ENCODE measurements at regions of chr4 and their contacts with region 1.

Region 1: DNA sequence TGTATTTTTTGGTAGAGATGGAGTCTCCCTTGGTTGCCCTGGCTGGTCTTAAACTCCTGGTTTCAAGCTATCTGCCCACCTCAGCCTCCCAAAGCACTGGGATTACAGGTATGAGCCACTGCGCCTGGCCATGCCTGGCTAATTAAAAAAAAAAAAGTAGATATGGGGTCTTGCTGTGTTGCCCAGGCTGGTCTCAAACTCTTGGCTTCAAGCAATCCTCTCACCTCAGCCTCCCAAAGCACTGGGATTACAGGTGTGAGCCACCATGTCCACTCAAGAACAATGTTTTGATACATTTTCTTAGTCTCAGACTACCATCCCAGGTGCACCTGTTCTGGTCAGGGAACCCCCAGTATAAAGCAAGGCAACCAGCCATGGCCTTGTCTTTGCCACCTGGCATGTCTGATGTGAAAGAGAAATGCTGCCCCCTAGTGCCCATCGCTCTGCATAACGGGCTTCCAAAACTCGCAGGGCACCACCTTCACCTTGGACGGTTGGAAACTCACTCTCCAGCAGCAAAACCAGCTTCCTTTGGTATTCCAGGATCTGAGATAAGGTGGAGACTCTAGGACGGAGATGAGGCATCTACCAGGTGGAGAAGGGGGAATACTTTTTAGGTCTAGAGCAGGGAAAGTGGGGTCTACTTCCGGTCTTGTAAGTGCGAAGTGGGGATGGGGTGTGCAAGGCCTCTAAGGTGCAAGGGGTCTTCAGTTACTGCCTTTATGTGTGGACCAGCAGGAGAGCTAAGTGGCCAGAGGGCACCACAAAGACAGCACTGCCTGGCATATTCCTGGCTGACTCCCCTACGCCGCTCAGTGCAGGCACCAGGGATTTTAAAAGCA is 47.7 kb upstream of the AFAP1 start:
- DNase-seq: peak; percentile 63 to 75
- ATAC-seq: peak; percentile 54 to 86 (median 72)
- H3K4me3 ChIP-seq: no peak overlapping the region
- H3K27ac ChIP-seq: no peak overlapping the region
- H3K4me1 ChIP-seq: peaks cover 0 to 18% (median 10%) of the 10 kb centered on the region in 9 donors
- H3K27me3 ChIP-seq: no peaks in the 10 kb centered on the region
- CTCF ChIP-seq: peak; percentile 67 to 90 (median 88)

Region 2: GRCh38 chr4:7761720-7762119 is 225.6 kb before region 1 on chr4:
- intact Hi-C with region 1: loop called in 3 of 10 experiments (anchors 2 to 5 kb)
- DNase-seq: peak; percentile 76 to 82
- ATAC-seq: peak; percentile 67 to 87 (median 80)
- H3K4me3 ChIP-seq: no peak overlapping the region
- H3K27ac ChIP-seq: peak overlapping the region in 2 of 10 donors; percentile 1 to 17
- H3K4me1 ChIP-seq: peaks cover 2 to 28% (median 11%) of the 10 kb centered on the region in 9 donors
- H3K27me3 ChIP-seq: no peaks in the 10 kb centered on the region
- CTCF ChIP-seq: peak; percentile 74 to 91 (median 82)

Region 3: DNA sequence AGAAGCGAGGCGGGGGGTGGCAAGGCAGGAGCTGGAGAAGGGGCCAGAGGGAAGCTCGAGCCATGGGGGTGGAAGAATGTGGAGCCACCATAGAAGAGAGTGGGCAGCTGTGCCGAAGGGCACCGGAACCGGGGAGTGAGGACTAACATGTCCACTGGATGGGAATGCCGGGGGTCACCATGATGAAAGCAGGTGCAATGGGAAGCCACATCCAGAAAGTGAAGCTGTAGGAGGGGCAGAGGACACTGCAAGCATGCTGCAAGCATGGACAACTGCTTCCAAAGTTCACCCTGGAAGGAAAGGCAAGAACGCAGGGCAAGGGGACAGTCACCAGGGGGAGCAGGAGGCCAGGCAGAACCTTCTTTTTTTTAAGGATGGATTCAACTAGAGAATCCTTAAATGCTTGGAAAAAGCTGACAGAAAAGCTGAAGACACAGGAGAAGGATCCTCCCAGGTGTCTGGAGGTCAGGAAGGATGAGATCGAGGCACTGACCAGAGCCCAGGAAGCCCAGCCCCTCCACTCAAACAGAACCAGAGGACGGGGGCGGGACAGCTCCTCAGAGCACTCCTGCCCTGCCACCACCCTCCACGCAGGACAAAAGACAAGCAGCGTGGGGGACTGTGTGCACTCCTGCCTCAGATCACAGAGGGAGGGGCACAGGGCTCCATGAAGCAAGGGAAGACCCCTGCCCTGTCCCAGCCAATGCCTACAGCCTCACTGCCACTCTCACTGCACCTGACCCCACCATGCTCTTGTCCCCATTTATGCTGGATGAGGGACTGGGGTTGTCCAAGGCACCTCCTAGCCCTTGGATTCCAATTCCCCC is 216.9 kb before region 1 on chr4:
- intact Hi-C with region 1: loop called in 1 of 10 experiments (anchors 10 kb)
- DNase-seq: no peak
- ATAC-seq: no peak
- H3K4me3 ChIP-seq: no peak overlapping the region
- H3K27ac ChIP-seq: no peak overlapping the region
- H3K4me1 ChIP-seq: peaks cover 0 to 14% (median 0%) of the 10 kb centered on the region in 9 donors
- H3K27me3 ChIP-seq: no peaks in the 10 kb centered on the region
- CTCF ChIP-seq: peak; percentile 27 to 70 (median 53)

Region 4: DNA sequence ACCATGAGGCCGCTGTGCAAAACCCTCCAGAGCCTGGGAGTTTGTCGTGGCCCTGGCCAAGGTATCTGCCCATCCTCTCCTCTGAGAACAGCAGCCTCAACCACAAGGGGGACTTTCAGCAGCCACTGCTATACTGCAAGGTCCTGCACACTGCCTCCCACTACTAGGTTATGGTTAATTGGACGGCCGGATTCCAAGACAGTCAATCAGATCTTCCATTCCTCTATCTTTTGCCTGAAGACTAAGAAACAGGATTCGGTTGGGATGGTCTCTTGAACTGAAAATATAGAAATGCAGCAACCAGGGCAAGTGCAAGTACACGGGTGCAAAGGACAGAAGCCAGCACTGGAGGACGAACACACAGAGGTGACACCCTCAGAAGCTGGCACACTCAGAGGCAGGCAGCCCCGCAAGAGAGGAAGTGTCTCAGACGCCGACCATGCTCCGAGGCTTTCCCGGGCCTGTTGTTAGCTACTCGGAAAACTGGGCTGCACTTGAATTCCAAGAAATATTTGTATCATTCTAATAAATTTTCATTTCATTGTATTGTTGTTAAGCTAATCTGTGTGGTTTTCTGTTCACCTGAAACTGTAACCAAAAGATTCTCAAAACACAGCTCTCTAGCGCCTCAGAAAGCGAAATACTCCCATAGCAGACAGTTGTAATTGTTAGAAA is 111.0 kb before region 1 on chr4:
- intact Hi-C with region 1: loop called in 1 of 10 experiments (anchors 10 kb)
- DNase-seq: no peak
- ATAC-seq: peak in 7 of 8 donors; percentile 35 to 58 (median 46)
- H3K4me3 ChIP-seq: peak overlapping the region in 1 of 10 donors; percentile 14
- H3K27ac ChIP-seq: peak overlapping the region in 4 of 10 donors; percentile 18 to 49 (median 21)
- H3K4me1 ChIP-seq: peaks cover 0 to 61% (median 48%) of the 10 kb centered on the region in 9 donors
- H3K27me3 ChIP-seq: no peaks in the 10 kb centered on the region
- CTCF ChIP-seq: peak in 3 of 9 donors; percentile 20 to 39 (median 25)

Region 5: GRCh38 chr4:7939377-7940108 is 47.8 kb before region 1 on chr4 and contains the start of gene AFAP1:
- intact Hi-C with region 1: loop called in 1 of 10 experiments (anchors 10 kb)
- DNase-seq: peak; percentile 91 to 92
- ATAC-seq: peak; percentile 95 to 98 (median 97)
- H3K4me3 ChIP-seq: peak within 1 kb of the TSS; percentile 77 to 93 (median 86)
- H3K27ac ChIP-seq: peak within 1 kb of the TSS; percentile 75 to 95 (median 92)
- H3K4me1 ChIP-seq: peaks cover 0 to 31% (median 19%) of the 10 kb centered on the region in 9 donors
- H3K27me3 ChIP-seq: peaks cover 0 to 34% (median 0%) of the 10 kb centered on the region in 7 donors
- CTCF ChIP-seq: no peak
- total RNA-seq, gene AFAP1: 4.7 to 8.9 (median 6.2) TPM

Region 6: DNA sequence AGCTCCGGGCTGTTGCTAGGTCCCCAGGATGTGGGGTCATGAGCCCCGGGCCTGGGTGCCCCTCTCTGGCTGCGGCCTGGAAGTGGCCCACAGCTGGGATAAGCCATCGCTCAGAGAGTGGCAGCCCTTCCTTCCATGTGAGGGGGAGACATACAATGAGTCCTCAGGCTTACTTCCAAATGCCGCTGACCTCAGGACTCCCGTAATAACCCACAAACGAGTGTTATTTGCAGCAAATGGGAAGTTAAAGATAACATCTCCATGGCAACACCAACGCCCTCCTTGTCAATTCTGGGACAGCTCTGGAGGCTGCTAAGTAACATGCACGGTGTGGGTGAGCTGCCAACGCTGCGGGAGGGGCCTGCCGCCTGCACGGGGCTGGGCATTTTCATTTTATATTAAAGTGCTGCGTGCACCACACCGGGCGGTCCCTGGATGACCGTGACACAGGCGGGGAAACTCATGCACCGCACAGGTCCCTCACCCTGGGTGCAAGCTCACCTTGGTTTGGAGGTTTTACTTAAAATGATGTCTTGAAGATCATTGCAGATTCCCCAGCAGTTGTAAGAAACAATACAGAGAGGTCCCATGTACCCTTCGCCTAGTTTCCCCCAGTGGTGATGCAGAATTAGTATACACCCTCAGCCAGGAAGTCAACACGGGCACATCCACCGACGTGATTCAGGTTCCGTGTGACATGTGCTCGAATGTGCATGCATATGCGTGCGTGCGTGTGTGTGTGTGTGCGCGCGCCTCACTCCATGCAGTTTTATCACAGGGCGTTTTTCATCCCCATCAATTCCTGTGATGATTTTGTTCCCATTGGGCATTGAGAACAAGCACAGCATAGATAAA is 91.9 kb after region 1 on chr4:
- intact Hi-C with region 1: no loop called
- DNase-seq: no peak
- ATAC-seq: peak; percentile 25 to 77 (median 58)
- H3K4me3 ChIP-seq: no peak overlapping the region
- H3K27ac ChIP-seq: no peak overlapping the region
- H3K4me1 ChIP-seq: peaks cover 6 to 29% (median 18%) of the 10 kb centered on the region in 9 donors
- H3K27me3 ChIP-seq: peaks cover 0 to 5% (median 0%) of the 10 kb centered on the region in 7 donors
- CTCF ChIP-seq: no peak

Region 7: DNA sequence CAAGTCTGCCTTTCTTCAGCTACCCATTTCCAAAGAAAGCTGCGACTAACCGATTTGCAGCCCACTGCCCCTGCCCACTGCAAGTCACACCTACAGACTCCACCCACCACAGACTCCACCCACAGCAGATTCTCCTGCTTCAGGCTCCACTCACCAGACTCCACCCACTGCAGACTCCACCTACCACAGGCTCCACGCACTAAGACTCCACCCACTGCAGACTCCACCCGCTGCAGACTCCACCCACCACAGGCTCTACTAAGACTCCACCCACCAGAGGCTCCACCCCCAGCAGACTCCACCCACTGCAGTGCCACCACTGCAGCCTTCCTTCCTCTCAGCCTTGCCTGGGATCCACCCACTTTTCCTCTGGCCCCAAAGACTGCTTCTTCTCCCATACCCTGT is 129.9 kb after region 1 on chr4:
- intact Hi-C with region 1: no loop called
- DNase-seq: peak; percentile 41 to 59
- ATAC-seq: peak; percentile 17 to 65 (median 49)
- H3K4me3 ChIP-seq: no peak overlapping the region
- H3K27ac ChIP-seq: peak overlapping the region in 3 of 10 donors; percentile 7 to 60 (median 51)
- H3K4me1 ChIP-seq: peaks cover 4 to 39% (median 24%) of the 10 kb centered on the region in 9 donors
- H3K27me3 ChIP-seq: no peaks in the 10 kb centered on the region
- CTCF ChIP-seq: no peak

Region 8: DNA sequence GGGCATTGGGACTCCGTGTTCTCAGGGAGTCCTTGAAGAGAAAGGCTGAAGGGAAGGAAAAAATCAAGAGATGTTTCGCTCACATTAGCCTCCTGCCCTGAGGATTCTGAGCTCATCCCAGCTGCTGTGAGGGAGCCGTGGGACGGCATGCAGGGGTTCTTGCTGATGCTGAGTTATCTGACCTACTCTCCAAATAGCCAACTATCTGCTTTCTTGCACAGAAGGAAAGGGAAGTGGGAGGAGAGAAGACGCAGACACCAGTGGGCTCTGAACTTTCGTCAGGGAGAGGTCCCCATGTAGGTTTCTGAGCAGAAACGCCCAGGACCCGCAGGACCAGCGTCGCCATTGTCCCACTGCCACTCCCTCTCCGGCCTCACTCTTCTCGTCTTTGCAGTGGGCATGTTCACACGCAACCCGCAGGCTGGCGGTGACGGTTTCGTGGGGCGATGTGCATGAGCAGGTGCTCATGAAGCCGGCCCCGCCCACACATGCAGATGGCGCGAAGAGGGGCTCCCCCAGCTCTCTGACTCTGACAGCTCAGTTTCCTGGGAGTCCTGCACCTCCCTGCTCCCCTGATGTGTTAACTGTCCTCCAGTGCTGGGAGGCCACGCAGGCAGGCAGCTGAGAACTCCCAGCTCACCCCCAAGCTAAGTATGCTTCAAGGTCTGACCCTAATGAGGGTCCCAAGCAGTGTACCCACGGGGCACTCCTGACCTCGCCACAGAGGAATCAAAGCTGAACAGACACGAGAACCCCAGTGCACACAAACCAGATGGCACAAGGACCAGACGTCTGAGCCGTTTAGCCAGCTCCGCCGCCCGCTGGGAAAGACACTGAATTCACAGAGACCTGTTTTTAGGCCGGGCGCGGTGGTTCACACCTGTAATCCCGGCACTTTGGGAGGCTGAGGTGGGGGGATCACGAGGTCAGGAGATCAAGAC is 184.9 kb after region 1 on chr4:
- intact Hi-C with region 1: no loop called
- DNase-seq: no peak
- ATAC-seq: no peak
- H3K4me3 ChIP-seq: no peak overlapping the region
- H3K27ac ChIP-seq: no peak overlapping the region
- H3K4me1 ChIP-seq: peaks cover 0 to 14% (median 7%) of the 10 kb centered on the region in 9 donors
- H3K27me3 ChIP-seq: peaks cover 0 to 18% (median 0%) of the 10 kb centered on the region in 7 donors
- CTCF ChIP-seq: no peak

Measured in heart right ventricle (tissue), 16 donors.